ENCODE measurements at regions of chr22 and their contacts with region 1.

Region 1: DNA sequence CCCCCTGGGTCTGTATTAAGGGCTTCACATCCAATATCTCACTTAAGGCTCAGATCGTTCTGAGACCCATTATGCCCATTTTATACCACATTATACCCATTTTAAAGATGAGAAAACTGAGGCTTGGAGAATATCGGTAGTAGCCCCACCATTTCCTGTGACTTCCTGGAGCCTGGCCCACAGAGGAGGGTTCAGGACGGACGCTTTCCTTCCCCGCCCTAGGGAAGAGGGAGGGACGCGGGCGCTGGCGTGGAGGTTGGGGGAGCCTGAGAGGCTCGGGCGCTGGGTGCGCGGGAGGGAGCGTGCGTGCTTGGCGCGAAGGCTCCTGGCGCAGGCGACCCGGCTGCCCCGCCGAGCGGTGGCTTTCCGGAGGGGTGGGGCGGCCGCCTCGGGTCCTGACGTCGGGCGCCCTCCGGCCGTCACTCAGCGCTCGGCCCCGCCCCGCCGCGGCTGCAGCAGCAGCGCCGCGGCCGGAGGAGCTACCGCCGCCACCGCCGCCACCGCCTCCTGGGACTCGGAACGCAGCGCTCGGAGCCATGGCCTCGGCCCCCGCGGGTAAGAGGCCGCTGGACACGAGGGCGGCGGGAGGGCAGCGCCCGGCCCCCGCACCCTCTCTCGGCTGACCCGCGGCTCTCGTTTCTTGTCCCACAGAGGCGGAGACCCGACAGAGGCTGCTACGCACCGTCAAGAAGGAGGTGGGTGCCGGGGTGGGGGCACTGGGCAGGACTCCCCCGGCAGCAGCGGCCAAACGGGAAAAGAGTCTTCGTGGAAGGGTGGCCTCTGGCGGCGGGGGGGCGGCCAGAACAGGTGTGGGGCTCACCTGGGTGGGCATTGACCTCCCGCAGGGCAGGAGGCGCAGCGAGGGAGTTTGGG is at the start of gene SGSM1:
- DNase-seq: peak; percentile 83
- ATAC-seq: peak; percentile 92
- H3K4me3 ChIP-seq: peak within 1 kb of the TSS in 4 of 5 experiments; percentile 33 to 73 (median 60)
- H3K4me3 Mint-ChIP-seq: peak within 1 kb of the TSS; percentile 79
- H3K27ac ChIP-seq: no peak within 1 kb of the TSS
- H3K27ac Mint-ChIP-seq: peak within 1 kb of the TSS; percentile 47
- H3K4me1 ChIP-seq: peaks cover 5 to 11% of the 10 kb centered on the region in 2 donors
- H3K4me1 Mint-ChIP-seq: peaks cover 6% of the 10 kb centered on the region
- H3K27me3 ChIP-seq: peaks cover 0 to 30% (median 6%) of the 10 kb centered on the region in 4 experiments
- H3K27me3 Mint-ChIP-seq: peaks cover 27% of the 10 kb centered on the region
- CTCF ChIP-seq: no peak
- total RNA-seq, gene SGSM1: 0.61 and 0.91 TPM in 2 replicates

Region 2: GRCh38 chr22:24845041-24845898 is 39.2 kb after region 1 on chr22:
- CTCF ChIA-PET with region 1: interaction called, 6 read pairs
- POLR2A ChIA-PET with region 1: no interaction called
- intact Hi-C with region 1: loop called (anchors 1 kb)
- DNase-seq: no peak
- ATAC-seq: no peak
- H3K4me3 ChIP-seq: no peak overlapping the region
- H3K4me3 Mint-ChIP-seq: no peak overlapping the region
- H3K27ac ChIP-seq: no peak overlapping the region
- H3K27ac Mint-ChIP-seq: no peak overlapping the region
- H3K4me1 ChIP-seq: no peaks in the 10 kb centered on the region
- H3K4me1 Mint-ChIP-seq: peaks cover under 1% of the 10 kb centered on the region
- H3K27me3 ChIP-seq: no peaks in the 10 kb centered on the region
- H3K27me3 Mint-ChIP-seq: peaks cover 28% of the 10 kb centered on the region
- CTCF ChIP-seq: no peak

Region 3: GRCh38 chr22:24894220-24894975 is 88.4 kb after region 1 on chr22:
- CTCF ChIA-PET with region 1: no interaction called
- POLR2A ChIA-PET with region 1: no interaction called
- intact Hi-C with region 1: no loop called
- DNase-seq: no peak
- ATAC-seq: no peak
- H3K4me3 ChIP-seq: no peak overlapping the region
- H3K4me3 Mint-ChIP-seq: no peak overlapping the region
- H3K27ac ChIP-seq: no peak overlapping the region
- H3K27ac Mint-ChIP-seq: no peak overlapping the region
- H3K4me1 ChIP-seq: no peaks in the 10 kb centered on the region
- H3K4me1 Mint-ChIP-seq: no peaks in the 10 kb centered on the region
- H3K27me3 ChIP-seq: peaks cover 0 to 4% (median 1%) of the 10 kb centered on the region in 4 experiments
- H3K27me3 Mint-ChIP-seq: peaks cover 16% of the 10 kb centered on the region
- CTCF ChIP-seq: no peak

Measured in B cell (primary cell).